Left ventricle myocardium inferior (tissue), 1 donor: ENCODE measurements at regions of chr5 and their contacts with region 1.

Region 1: DNA sequence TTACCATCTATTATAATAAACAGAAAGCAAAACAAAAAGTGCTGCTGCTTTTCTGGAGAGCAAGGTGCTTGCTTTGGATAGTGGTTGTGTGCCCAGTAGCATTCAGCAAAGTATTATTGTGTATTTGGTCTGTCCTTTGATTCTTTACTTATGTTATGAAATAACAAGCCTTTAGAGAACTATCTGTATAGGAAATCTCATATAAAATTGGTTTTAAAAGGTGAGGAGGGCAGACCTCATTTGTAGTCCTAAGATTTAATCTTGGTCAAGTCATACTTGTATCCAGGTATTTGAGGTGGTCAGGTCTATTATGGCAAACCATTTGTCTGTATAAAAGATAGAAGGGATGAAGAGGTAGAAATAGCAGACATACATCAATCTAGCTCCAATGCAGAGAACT is 53.3 kb downstream of the BDP1 start:
- DNase-seq: no peak
- H3K4me3 ChIP-seq: no peak overlapping the region
- H3K27ac ChIP-seq: no peak overlapping the region
- H3K4me1 ChIP-seq: no peaks in the 10 kb centered on the region
- H3K27me3 ChIP-seq: no peaks in the 10 kb centered on the region
- CTCF ChIP-seq: no peak

Region 2: GRCh38 chr5:71658916-71659662 is 150.3 kb after region 1 on chr5:
- intact Hi-C with region 1: loop called (anchors 10 kb)
- DNase-seq: no peak
- H3K4me3 ChIP-seq: no peak overlapping the region
- H3K27ac ChIP-seq: no peak overlapping the region
- H3K4me1 ChIP-seq: no peaks in the 10 kb centered on the region
- H3K27me3 ChIP-seq: no peaks in the 10 kb centered on the region
- CTCF ChIP-seq: no peak